Gastrocnemius medialis (tissue), 4 donors: ENCODE measurements at regions of chr19 and their contacts with region 1.

Region 1: DNA sequence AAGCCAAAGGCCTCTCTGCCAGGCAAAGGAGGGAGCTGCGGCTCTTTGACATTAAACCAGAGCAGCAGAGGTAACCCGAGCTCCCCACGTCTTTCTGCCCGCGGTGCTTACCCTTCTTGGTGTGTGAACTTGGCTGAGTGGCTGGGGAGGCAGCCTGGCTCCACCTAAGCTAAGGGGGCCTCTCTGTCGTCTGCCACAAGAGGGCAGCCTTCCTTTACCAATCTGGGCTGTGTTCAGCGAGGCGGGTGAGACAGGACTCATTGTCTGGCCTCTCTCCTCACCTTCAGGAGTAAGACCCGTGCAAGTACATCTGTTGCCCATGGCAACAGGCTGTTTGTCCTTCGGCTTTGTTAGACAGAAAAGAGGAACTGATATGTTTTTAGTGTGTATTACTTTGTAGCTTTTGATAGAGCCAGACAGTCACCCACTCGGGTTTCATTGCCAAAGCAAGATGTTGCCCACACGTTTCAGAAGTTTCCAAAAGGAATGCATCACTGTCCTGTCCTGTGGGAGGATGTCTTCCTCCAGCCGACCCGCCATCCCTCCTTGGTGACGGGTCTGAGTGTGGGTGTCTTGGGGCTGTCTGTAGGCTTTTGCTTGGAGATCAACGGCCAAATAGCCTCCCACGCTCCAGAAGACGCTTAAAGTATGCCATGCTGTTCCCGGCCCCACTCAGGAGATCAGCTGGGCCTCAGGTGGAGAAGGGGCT is 4.6 kb downstream of the POP4 start:
- DNase-seq: peak; percentile 75 to 88
- ATAC-seq: peak; percentile 80 to 85
- H3K4me3 ChIP-seq: no peak overlapping the region
- H3K27ac ChIP-seq: peak overlapping the region; percentile 51 to 81 (median 53)
- H3K4me1 ChIP-seq: peaks cover 17 to 19% of the 10 kb centered on the region in 2 donors
- H3K27me3 ChIP-seq: no peaks in the 10 kb centered on the region
- CTCF ChIP-seq: peak; percentile 79 to 90 (median 84)
- POLR2A ChIP-seq: no peak

Region 2: GRCh38 chr19:29596885-29597525 is 13.7 kb before region 1 on chr19:
- in situ Hi-C with region 1: no loop called
- intact Hi-C with region 1: no loop called
- DNase-seq: no peak
- ATAC-seq: no peak
- H3K4me3 ChIP-seq: no peak overlapping the region
- H3K27ac ChIP-seq: no peak overlapping the region
- H3K4me1 ChIP-seq: no peaks in the 10 kb centered on the region
- H3K27me3 ChIP-seq: peaks cover 7 to 21% (median 8%) of the 10 kb centered on the region in 3 donors
- CTCF ChIP-seq: no peak
- POLR2A ChIP-seq: no peak

Region 3: GRCh38 chr19:29665215-29665825 is 54.6 kb after region 1 on chr19 and contains the start of gene PLEKHF1:
- in situ Hi-C with region 1: loop called in 1 of 4 experiments (anchors 5 kb)
- intact Hi-C with region 1: loop called (anchors 2 kb)
- DNase-seq: peak; percentile 88 to 93
- ATAC-seq: peak; percentile 66 to 67
- H3K4me3 ChIP-seq: peak within 1 kb of the TSS; percentile 94 to 99 (median 97)
- H3K27ac ChIP-seq: peak within 1 kb of the TSS; percentile 94 to 100 (median 98)
- H3K4me1 ChIP-seq: peaks cover 56 to 66% of the 10 kb centered on the region in 2 donors
- H3K27me3 ChIP-seq: no peaks in the 10 kb centered on the region
- CTCF ChIP-seq: peak in 1 of 5 experiments; percentile 17
- POLR2A ChIP-seq: peak; percentile 97 to 99
- total RNA-seq, gene PLEKHF1: 69.1 to 164 (median 135) TPM

Region 4: GRCh38 chr19:29714953-29715700 is 104.4 kb after region 1 on chr19 and contains the start of gene C19orf12:
- in situ Hi-C with region 1: loop called (anchors 5 to 10 kb)
- intact Hi-C with region 1: loop called (anchors 1 kb)
- DNase-seq: peak in 1 of 2 donors; percentile 54
- ATAC-seq: peak; percentile 82 to 86
- H3K4me3 ChIP-seq: peak within 1 kb of the TSS; percentile 80 to 99 (median 86)
- H3K27ac ChIP-seq: peak within 1 kb of the TSS; percentile 94 to 98 (median 94)
- H3K4me1 ChIP-seq: peaks cover 24 to 26% of the 10 kb centered on the region in 2 donors
- H3K27me3 ChIP-seq: no peaks in the 10 kb centered on the region
- CTCF ChIP-seq: peak in 2 of 5 experiments; percentile 24 to 28
- POLR2A ChIP-seq: peak; percentile 92 to 94
- total RNA-seq, gene C19orf12: 54.4 to 142 (median 69.8) TPM

Region 5: GRCh38 chr19:29873024-29873800 is 262.5 kb after region 1 on chr19:
- in situ Hi-C with region 1: no loop called
- intact Hi-C with region 1: loop called (anchors 10 kb)
- DNase-seq: peak in 1 of 2 donors; percentile 32
- ATAC-seq: peak; percentile 53 to 54
- H3K4me3 ChIP-seq: peak overlapping the region; percentile 61 to 73 (median 64)
- H3K27ac ChIP-seq: peak overlapping the region; percentile 85 to 92 (median 88)
- H3K4me1 ChIP-seq: peaks cover 15 to 37% of the 10 kb centered on the region in 2 donors
- H3K27me3 ChIP-seq: no peaks in the 10 kb centered on the region
- CTCF ChIP-seq: peak; percentile 75 to 96 (median 91)
- POLR2A ChIP-seq: no peak